Activated CD4-positive, alpha-beta T cell treated with anti-CD3 and anti-CD28 coated beads, Interleukin-2, amount 10 ng/mL, durations not matched to agents 24 days and 14 days (primary cell): ENCODE measurements at regions of chr12 and their contacts with region 1.

Region 1: DNA sequence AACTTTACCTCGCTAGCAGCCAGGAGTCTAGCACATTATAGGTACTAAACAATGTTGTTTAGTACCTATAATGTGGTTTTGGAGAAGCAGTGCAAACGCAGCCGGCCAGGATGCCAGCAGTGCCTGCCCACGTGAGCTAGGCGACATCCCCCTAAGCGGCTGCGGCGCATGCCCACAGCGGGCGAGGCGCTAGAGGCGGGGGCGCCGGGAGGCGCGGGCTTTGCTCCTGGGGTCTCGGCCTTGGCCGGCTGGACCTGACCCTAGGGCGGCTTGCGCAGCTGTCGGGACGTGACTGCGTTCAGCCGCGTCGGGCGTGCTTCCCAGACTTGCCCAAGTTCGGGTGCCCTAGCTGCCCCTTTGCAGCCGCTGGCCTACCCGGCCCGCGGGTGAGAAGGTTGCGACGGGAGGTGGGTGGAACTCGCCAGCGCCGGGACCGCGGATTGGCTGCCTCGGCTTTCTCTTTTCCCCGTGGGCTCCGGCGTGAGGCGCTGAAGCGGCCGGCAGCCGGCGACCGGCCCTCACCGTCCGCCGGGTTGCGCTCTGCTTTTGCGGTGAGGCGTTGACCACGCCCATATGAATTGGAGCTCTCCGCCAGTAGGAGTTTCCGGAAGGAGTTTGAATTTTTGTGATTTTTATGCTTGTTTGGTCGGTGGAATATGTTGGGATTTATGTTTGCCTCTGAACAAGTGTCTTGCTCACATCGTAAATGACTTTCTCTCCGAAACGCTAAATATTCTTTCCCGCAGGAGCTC is at the start of gene TMEM19:
- DNase-seq: peak; percentile 94
- H3K4me3 Mint-ChIP-seq: peak within 1 kb of the TSS; percentile 92
- H3K27ac Mint-ChIP-seq: peak within 1 kb of the TSS; percentile 95
- H3K4me1 Mint-ChIP-seq: peaks cover 12% of the 10 kb centered on the region
- H3K27me3 Mint-ChIP-seq: no peaks in the 10 kb centered on the region
- total RNA-seq, gene TMEM19: 10.2 and 13.5 TPM in 2 replicates

Region 2: DNA sequence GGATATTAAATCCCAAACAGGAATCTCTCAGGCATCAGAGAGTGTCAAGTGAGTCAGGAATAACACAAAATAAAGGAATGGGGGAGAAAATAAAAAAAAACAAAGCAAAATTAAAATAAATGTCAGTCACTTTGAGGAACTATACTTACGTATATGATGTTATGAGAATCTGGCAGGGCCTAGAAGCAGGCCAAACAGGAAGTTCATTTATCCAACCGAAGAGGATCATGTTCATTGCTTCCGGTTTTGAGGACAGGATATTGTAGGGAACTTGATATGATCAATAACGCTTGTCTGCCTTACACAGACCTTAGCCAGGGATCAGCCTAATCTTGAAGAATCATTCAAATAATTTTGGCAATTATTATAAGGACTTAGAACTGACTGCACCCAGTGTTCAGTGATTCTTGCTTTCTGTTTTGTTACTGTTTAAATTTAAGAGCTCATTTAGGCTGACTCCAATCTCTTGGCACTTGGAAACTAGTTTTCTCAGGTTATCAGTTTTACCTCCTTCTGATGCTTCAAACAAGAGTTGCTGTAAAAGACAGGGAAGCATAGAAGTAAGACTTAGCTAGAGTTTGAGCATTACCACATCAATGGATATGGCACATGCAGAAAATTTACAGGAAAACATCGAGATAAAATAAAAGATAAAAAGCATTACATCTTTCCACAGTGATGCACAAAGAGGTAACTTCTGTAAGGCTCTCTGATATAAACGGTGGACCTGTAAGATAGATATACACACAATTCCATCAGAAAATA is 75.9 kb before region 1 on chr12:
- intact Hi-C with region 1: no loop called
- DNase-seq: no peak
- H3K4me3 Mint-ChIP-seq: peak overlapping the region; percentile 32
- H3K27ac Mint-ChIP-seq: peak overlapping the region; percentile 76
- H3K4me1 Mint-ChIP-seq: peaks cover 11% of the 10 kb centered on the region
- H3K27me3 Mint-ChIP-seq: no peaks in the 10 kb centered on the region

Region 3: GRCh38 chr12:71754461-71755145 is 68.5 kb after region 1 on chr12 and contains the start of gene RAB21:
- intact Hi-C with region 1: loop called (anchors 1 kb)
- DNase-seq: peak; percentile 99
- H3K4me3 Mint-ChIP-seq: peak within 1 kb of the TSS; percentile 93
- H3K27ac Mint-ChIP-seq: peak within 1 kb of the TSS; percentile 97
- H3K4me1 Mint-ChIP-seq: peaks cover 23% of the 10 kb centered on the region
- H3K27me3 Mint-ChIP-seq: peaks cover 25% of the 10 kb centered on the region
- total RNA-seq, gene RAB21: 91.7 and 92.4 TPM in 2 replicates